ENCODE measurements at regions of chr12 and their contacts with region 1.

Region 1: GRCh38 chr12:127485528-127485927 is 781.4 kb upstream of the TMEM132C start:
- DNase-seq: peak; percentile 63
- H3K4me3 Mint-ChIP-seq: no peak overlapping the region
- H3K27ac Mint-ChIP-seq: no peak overlapping the region
- H3K4me1 Mint-ChIP-seq: no peaks in the 10 kb centered on the region
- H3K27me3 Mint-ChIP-seq: peaks cover 2% of the 10 kb centered on the region

Region 2: GRCh38 chr12:127035011-127035879 is 450.3 kb before region 1 on chr12:
- CTCF ChIA-PET with region 1: no interaction called
- POLR2A ChIA-PET with region 1: no interaction called
- intact Hi-C with region 1: no loop called
- DNase-seq: no peak
- H3K4me3 Mint-ChIP-seq: no peak overlapping the region
- H3K27ac Mint-ChIP-seq: no peak overlapping the region
- H3K4me1 Mint-ChIP-seq: no peaks in the 10 kb centered on the region
- H3K27me3 Mint-ChIP-seq: peaks cover 4% of the 10 kb centered on the region

Region 3: DNA sequence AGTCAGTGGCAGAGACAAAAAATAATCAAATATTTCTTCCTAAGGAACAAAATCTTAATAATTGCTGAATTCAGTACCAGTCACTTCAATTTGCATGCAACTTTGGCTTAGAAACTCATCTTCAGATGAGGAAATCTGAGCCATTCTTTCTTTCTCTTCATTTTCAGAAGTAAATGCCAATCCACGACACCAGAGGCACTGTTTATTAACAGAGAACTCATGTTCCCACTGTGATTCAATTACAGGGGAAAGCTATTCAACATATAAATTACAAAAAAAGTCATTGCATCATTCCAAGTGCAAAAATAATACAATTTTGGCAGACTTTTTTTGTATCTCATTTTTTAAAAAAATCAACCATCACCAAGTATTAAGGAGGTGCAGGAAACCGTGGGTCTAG is 34.7 kb before region 1 on chr12:
- CTCF ChIA-PET with region 1: no interaction called
- POLR2A ChIA-PET with region 1: no interaction called
- intact Hi-C with region 1: no loop called
- DNase-seq: no peak
- H3K4me3 Mint-ChIP-seq: no peak overlapping the region
- H3K27ac Mint-ChIP-seq: no peak overlapping the region
- H3K4me1 Mint-ChIP-seq: no peaks in the 10 kb centered on the region
- H3K27me3 Mint-ChIP-seq: peaks cover 14% of the 10 kb centered on the region

Region 4: DNA sequence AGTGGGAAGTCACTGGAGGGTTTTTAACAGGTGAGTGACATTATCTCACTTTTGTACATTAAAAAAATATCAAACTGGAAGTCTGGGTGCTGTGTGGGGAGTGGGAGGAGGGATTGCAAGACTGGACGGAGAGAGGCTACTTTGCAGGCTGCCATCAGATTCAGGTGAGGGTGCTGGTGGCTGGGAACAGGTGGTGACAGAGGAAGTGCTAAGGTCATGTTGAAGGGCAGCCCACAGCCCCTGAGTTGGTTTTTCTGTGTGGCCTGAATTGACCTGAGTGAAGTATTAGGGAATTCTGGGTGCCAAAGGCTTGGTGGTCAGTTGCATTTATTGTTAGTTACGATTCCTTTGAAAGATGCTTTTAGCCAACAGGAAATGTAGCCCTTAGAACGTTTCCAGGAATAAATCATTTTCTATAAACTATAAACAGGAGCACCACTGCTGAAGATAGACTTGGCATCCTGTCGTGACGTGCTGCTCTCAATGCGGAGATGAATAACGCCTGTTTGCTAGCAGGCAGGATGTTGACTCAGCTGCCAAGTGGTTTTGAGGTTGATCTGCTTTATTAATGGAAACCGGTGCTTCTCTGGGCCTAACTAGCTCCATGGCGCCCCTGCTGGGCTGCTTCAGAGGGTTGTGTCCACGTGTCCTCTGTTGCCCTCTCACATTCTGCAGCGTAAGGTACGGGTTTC is 74.0 kb after region 1 on chr12:
- CTCF ChIA-PET with region 1: no interaction called
- POLR2A ChIA-PET with region 1: no interaction called
- intact Hi-C with region 1: loop called (anchors 2 kb)
- DNase-seq: peak; percentile 89
- H3K4me3 Mint-ChIP-seq: no peak overlapping the region
- H3K27ac Mint-ChIP-seq: peak overlapping the region; percentile 85
- H3K4me1 Mint-ChIP-seq: peaks cover 22% of the 10 kb centered on the region
- H3K27me3 Mint-ChIP-seq: no peaks in the 10 kb centered on the region

Region 5: DNA sequence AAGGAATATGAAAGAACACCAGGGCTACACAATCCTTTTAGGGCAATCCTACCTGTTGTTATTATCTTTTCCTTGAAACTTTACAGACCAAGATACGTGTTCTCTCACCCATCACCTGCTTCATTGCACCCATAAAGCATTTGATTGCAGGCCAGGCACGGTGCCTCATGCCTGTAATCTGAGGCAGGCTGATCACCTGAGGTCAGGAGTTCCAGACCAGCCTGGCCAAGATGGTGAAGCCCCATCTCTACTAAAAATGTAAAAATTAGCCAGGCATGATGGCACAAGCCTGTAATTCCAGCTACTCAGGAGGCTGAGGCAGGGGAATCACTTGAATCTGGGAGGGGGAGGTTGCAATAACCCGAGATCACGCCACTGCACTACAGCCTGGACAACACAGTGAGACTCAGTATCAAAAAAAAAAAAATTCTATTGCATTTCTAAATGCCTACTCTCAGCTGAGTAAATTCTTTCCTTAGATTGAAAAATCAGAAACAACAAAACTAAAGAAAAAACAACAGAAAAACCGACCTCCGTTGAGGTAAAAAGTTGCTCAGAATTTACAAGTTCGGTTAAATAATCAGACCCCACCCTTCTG is 597.7 kb after region 1 on chr12:
- CTCF ChIA-PET with region 1: no interaction called
- POLR2A ChIA-PET with region 1: no interaction called
- intact Hi-C with region 1: loop called (anchors 5 kb)
- DNase-seq: peak; percentile 13
- H3K4me3 Mint-ChIP-seq: no peak overlapping the region
- H3K27ac Mint-ChIP-seq: no peak overlapping the region
- H3K4me1 Mint-ChIP-seq: no peaks in the 10 kb centered on the region
- H3K27me3 Mint-ChIP-seq: no peaks in the 10 kb centered on the region

Measured in activated CD4-positive, alpha-beta memory T cell treated with anti-CD3 and anti-CD28 coated beads for 36 hours (primary cell).